ENCODE measurements at regions of chr17 and their contacts with region 1.

Region 1: GRCh38 chr17:3986270-3986938 is 22.2 kb upstream of the ATP2A3 start:
- DNase-seq: no peak
- H3K4me3 ChIP-seq: no peak overlapping the region
- H3K27ac ChIP-seq: no peak overlapping the region
- H3K4me1 ChIP-seq: peaks cover 0 to 17% (median 4%) of the 10 kb centered on the region in 4 donors
- H3K27me3 ChIP-seq: no peaks in the 10 kb centered on the region
- CTCF ChIP-seq: no peak
- EP300 ChIP-seq: no peak
- POLR2A ChIP-seq: no peak

Region 2: DNA sequence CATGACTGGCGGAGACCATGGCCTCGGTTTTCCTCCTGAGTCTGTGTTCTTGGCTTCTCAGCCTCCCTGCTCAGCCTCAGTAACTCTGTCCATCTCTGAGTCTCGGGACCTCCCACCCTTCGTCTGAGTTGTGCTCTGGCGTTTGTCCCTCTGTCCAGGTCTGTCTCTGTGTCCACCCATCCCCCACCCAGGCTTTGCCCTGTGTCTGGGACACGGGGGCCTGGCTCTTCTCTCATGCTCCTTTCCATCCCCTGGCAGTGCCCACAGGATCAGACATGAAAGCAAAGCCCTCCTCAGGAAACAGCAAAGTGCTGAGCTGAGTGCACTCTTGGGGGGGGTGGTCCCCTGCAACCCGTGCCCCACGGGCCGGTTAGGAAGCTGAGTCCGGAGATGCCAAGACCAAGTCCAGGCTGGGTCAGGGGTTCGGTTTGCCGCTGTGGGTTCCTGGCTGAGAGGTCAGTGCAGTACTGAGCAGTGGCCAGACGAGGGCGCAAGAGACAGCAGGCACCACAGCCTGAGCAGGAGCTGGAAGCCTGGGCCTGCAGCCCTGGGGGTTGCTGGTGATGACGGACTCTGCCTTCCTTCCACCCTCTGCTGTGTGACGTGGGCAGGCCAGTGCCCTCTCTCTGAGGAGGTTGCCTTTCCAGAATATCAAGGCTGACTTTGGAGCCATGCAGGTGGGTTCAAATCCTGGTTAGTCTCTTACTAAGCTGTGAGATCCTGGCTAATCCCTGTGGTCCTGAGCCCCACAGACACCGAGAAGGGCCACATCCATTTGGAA is 72.7 kb before region 1 on chr17:
- in situ Hi-C with region 1: loop called in 1 of 4 experiments (anchors 10 kb)
- intact Hi-C with region 1: no loop called
- DNase-seq: peak; percentile 88
- H3K4me3 ChIP-seq: no peak overlapping the region
- H3K27ac ChIP-seq: peak overlapping the region; percentile 53 to 82 (median 80)
- H3K4me1 ChIP-seq: peaks cover 29 to 45% (median 35%) of the 10 kb centered on the region in 4 donors
- H3K27me3 ChIP-seq: no peaks in the 10 kb centered on the region
- CTCF ChIP-seq: peak; percentile 96 to 98 (median 98)
- EP300 ChIP-seq: no peak
- POLR2A ChIP-seq: no peak

Region 3: DNA sequence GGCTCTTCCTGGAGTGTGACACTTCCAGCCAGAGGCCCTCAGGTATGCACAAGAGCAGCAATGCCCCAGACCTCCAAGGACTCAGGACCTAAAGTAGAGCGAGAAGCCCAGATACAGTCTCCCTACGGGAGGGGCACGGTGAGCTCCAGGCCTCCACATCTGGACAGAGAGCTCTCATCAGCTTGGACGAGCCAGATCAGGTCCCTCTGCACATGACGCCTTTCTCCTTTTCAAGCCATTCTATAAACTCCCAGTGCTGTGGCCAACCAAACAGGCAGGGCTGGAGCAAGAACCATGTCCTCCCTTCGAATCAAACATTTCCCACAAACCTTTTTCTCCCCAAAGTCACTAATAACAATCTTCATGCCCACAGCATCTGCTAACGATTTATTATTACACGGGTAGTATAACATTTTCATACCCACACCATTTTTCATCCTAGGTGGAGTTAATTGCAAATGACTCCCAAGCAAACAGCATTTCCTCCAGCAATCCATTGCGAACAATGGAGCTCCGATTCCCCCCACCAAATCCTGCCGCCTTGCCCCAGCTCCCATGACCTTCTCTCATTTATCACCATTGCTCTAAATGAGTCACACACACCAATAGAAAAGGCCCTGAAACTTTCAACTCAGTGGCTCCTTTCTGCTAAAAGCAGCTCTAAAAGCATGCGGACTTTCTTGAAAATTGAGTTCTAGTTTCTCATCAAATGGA is 1622.2 kb after region 1 on chr17:
- in situ Hi-C with region 1: no loop called
- intact Hi-C with region 1: loop called (anchors 5 kb)
- DNase-seq: no peak
- H3K4me3 ChIP-seq: no peak overlapping the region
- H3K27ac ChIP-seq: no peak overlapping the region
- H3K4me1 ChIP-seq: no peaks in the 10 kb centered on the region
- H3K27me3 ChIP-seq: no peaks in the 10 kb centered on the region
- CTCF ChIP-seq: no peak
- EP300 ChIP-seq: no peak
- POLR2A ChIP-seq: no peak

Measured in transverse colon (tissue), 4 donors.